ENCODE measurements at regions of chr14 and their contacts with region 1.

Region 1: GRCh38 chr14:98182393-98183055 is 1089.5 kb downstream of the BCL11B start:
- DNase-seq: no peak
- H3K4me3 Mint-ChIP-seq: peak overlapping the region; percentile 26
- H3K27ac Mint-ChIP-seq: peak overlapping the region; percentile 94
- H3K4me1 Mint-ChIP-seq: peaks cover 84% of the 10 kb centered on the region
- H3K27me3 Mint-ChIP-seq: no peaks in the 10 kb centered on the region

Region 2: GRCh38 chr14:98167705-98168104 is 14.8 kb before region 1 on chr14:
- intact Hi-C with region 1: loop called (anchors 1 kb)
- DNase-seq: no peak
- H3K4me3 Mint-ChIP-seq: no peak overlapping the region
- H3K27ac Mint-ChIP-seq: peak overlapping the region; percentile 37
- H3K4me1 Mint-ChIP-seq: peaks cover 57% of the 10 kb centered on the region
- H3K27me3 Mint-ChIP-seq: no peaks in the 10 kb centered on the region

Measured in activated T-helper 2 cell treated with anti-CD3 and anti-CD28 coated beads, Interferon-gamma antibody, Interleukin-2, Interleukin-4, amounts not matched to agents 10 μg/mL and 5 μg/mL and 100 μg/mL, durations not matched to agents 14 hours and 24 hours and 36 hours (primary cell).